ENCODE measurements at regions of chr14 and their contacts with region 1.

Region 1: GRCh38 chr14:85528080-85528896 is 1.7 kb upstream of the FLRT2 start:
- DNase-seq: peak; percentile 56 to 93
- ATAC-seq: peak; percentile 52 to 74
- H3K4me3 ChIP-seq: peak overlapping the region; percentile 51
- H3K27ac ChIP-seq: peak overlapping the region; percentile 70 to 86
- H3K4me1 ChIP-seq: peaks cover 21% of the 10 kb centered on the region
- CTCF ChIP-seq: peak; percentile 80
- EP300 ChIP-seq: no peak
- POLR2A ChIP-seq: no peak
- RAD21 ChIP-seq: peak; percentile 96 to 97

Region 2: GRCh38 chr14:85409496-85410210 is 118.6 kb before region 1 on chr14:
- CTCF ChIA-PET with region 1: interaction called, 17 read pairs
- POLR2A ChIA-PET with region 1: no interaction called
- DNase-seq: no peak
- ATAC-seq: no peak
- H3K4me3 ChIP-seq: no peak overlapping the region
- H3K27ac ChIP-seq: no peak overlapping the region
- H3K4me1 ChIP-seq: peaks cover under 1% of the 10 kb centered on the region; the same call in 1 of the 3 replicates
- CTCF ChIP-seq: no peak
- EP300 ChIP-seq: no peak
- POLR2A ChIP-seq: no peak
- RAD21 ChIP-seq: no peak

Region 3: GRCh38 chr14:85416771-85417170 is 111.5 kb before region 1 on chr14:
- CTCF ChIA-PET with region 1: interaction called, 17 read pairs
- POLR2A ChIA-PET with region 1: interaction called, 4 read pairs
- DNase-seq: peak; percentile 15 to 79
- ATAC-seq: peak; percentile 55 to 67; a peak in 5 of 6 replicates
- H3K4me3 ChIP-seq: no peak overlapping the region
- H3K27ac ChIP-seq: peak overlapping the region; percentile 66 to 83
- H3K4me1 ChIP-seq: peaks cover 34% of the 10 kb centered on the region
- CTCF ChIP-seq: no peak
- EP300 ChIP-seq: peak in 1 of 2 experiments; percentile 30; a peak in 1 of 5 replicates
- POLR2A ChIP-seq: no peak
- RAD21 ChIP-seq: 0 out of 5 replicates have a peak, but pooled peaks have one; percentile 10 to 17

Region 4: GRCh38 chr14:85439696-85440328 is 88.5 kb before region 1 on chr14:
- CTCF ChIA-PET with region 1: interaction called, 30 read pairs
- POLR2A ChIA-PET with region 1: interaction called, 3 read pairs
- DNase-seq: peak in 1 of 2 experiments; percentile 72
- ATAC-seq: peak in 1 of 2 experiments; percentile 77; a peak in 3 of 6 replicates
- H3K4me3 ChIP-seq: no peak overlapping the region
- H3K27ac ChIP-seq: peak overlapping the region; percentile 71 to 81
- H3K4me1 ChIP-seq: peaks cover 69% of the 10 kb centered on the region
- CTCF ChIP-seq: no peak
- EP300 ChIP-seq: no peak
- POLR2A ChIP-seq: no peak
- RAD21 ChIP-seq: peak; percentile 13 to 19; a peak in 1 of 5 replicates

Measured in A549 (cell line).